Activated naive CD4-positive, alpha-beta T cell treated with anti-CD3 and anti-CD28 coated beads, Interleukin-2, amount 10 ng/mL, durations not matched to agents 7 days and 5 days (primary cell): ENCODE measurements at regions of chr12 and their contacts with region 1.

Region 1: DNA sequence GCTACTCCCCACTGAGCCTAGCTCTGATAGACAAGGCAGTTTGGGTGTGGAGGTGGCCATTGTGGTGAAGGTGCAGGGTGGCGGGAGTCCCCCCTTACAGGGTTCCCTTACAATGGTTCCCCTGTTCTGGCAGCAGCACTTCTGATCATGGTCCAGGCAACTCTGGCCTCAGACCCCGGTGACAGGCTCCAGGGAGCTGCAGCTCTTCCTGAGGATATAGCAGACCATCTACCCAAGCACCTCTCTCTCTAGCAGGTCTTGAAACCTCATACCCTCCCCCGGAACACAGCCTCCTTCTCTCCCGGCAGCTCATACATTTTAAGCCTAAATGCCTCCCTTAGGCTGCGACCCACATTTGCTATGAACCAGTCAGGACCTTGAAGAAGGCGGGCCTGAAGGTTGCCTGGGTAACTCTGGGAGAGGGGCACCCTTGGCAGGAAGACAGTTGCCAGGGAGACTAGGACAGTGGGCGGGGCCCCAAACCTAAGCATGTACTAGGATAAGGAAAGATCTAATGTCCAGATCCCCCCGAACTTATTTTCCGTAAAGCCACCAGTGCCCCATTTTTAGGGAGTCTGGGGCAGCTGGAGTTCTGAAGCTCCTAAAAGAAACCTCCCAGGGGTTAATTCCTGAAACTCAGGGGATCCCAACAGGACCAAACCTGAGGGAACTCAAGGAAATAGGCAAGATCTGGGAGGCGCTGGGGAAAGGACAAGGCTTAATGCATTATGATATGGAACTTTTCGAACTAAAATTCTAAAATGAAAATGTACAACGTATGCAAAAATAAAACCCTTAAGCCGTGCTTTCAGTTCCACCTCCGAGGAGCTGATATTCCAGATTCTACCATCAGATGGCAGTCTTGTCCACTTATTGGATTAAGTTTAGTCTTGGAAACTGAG is 4.5 kb upstream of the GDF11 start:
- DNase-seq: peak; percentile 90
- H3K4me3 Mint-ChIP-seq: peak overlapping the region; percentile 73
- H3K27ac Mint-ChIP-seq: peak overlapping the region; percentile 78
- H3K4me1 Mint-ChIP-seq: peaks cover 41% of the 10 kb centered on the region
- H3K27me3 Mint-ChIP-seq: peaks cover 32% of the 10 kb centered on the region

Region 2: GRCh38 chr12:55715833-55716581 is 22.4 kb before region 1 on chr12 and contains the start of gene BLOC1S1:
- CTCF ChIA-PET with region 1: interaction called, 166 read pairs
- DNase-seq: peak; percentile 96
- H3K4me3 Mint-ChIP-seq: peak within 1 kb of the TSS; percentile 90
- H3K27ac Mint-ChIP-seq: peak within 1 kb of the TSS; percentile 94
- H3K4me1 Mint-ChIP-seq: peaks cover 49% of the 10 kb centered on the region
- H3K27me3 Mint-ChIP-seq: peaks cover 26% of the 10 kb centered on the region

Region 3: GRCh38 chr12:55797068-55797467 is 58.7 kb after region 1 on chr12:
- CTCF ChIA-PET with region 1: interaction called, 58 read pairs
- DNase-seq: peak; percentile 29
- H3K4me3 Mint-ChIP-seq: no peak overlapping the region
- H3K27ac Mint-ChIP-seq: no peak overlapping the region
- H3K4me1 Mint-ChIP-seq: peaks cover 2% of the 10 kb centered on the region
- H3K27me3 Mint-ChIP-seq: no peaks in the 10 kb centered on the region

Region 4: DNA sequence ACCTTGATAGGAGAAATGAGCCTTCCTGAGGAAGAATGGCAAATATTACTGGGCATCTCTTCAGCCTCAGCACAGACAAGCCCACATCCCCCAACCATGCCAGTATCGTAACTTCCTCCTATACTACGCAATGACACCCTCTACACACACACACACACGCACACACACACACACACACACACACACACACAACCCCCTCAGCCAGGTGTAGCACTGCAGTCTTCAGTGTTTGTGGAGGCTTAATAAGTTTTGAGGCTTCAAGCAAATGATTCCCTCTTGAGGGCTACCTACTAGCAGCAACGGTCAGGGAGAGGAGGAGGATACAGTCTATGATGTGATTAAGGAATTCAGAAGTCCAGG is 194.2 kb after region 1 on chr12:
- CTCF ChIA-PET with region 1: interaction called, 16 read pairs
- DNase-seq: peak; percentile 62
- H3K4me3 Mint-ChIP-seq: peak overlapping the region; percentile 92
- H3K27ac Mint-ChIP-seq: peak overlapping the region; percentile 100
- H3K4me1 Mint-ChIP-seq: peaks cover 58% of the 10 kb centered on the region
- H3K27me3 Mint-ChIP-seq: no peaks in the 10 kb centered on the region

Region 5: GRCh38 chr12:55940065-55940732 is 201.8 kb after region 1 on chr12:
- CTCF ChIA-PET with region 1: interaction called, 36 read pairs
- DNase-seq: peak; percentile 91
- H3K4me3 Mint-ChIP-seq: peak overlapping the region; percentile 37
- H3K27ac Mint-ChIP-seq: peak overlapping the region; percentile 86
- H3K4me1 Mint-ChIP-seq: peaks cover 92% of the 10 kb centered on the region
- H3K27me3 Mint-ChIP-seq: no peaks in the 10 kb centered on the region

Region 6: DNA sequence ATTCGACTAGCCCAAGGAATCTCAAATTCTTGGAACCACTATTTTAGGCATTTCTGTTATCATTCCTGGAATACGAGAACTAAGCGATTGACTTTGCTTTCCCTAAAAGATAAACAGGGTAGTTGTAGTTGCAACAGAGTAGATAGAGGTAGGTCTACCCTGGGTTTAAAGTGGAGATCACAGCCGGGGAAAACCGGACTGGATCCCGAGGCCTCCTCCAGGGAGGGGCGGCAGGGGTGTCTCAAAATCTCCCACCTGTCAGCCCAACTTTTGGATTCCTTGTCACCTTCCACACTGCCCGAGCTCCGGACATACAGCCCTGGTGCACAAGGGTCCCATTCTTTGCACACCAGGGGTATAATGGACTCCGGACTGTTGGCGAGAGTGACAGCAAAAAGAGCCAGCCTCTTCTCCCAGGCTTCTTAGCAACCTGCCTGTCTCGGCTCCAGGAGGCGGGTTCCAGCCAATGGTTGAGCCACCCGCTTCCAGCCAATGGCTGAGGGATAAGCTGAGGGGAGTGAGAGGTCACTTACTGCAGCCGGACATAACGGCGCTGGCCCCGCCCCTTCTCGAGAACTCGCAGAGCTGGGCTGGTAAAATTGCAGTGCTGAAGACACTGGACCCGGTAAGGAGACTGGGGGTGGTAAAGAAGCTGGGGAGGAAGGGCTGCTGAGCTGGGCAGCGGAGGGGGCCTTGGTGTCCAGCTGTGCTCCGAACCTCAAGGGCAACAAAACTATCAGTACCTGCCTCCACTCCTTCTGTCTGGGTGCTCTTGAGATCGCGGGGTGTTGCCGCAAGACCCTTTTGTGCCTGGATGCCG is 258.6 kb after region 1 on chr12 and contains the start of gene SUOX:
- CTCF ChIA-PET with region 1: interaction called, 14 read pairs
- DNase-seq: peak; percentile 54
- H3K4me3 Mint-ChIP-seq: peak within 1 kb of the TSS; percentile 57
- H3K27ac Mint-ChIP-seq: peak within 1 kb of the TSS; percentile 42
- H3K4me1 Mint-ChIP-seq: peaks cover 35% of the 10 kb centered on the region
- H3K27me3 Mint-ChIP-seq: peaks cover 30% of the 10 kb centered on the region

Region 7: GRCh38 chr12:56041552-56042429 is 303.4 kb after region 1 on chr12 and contains the start of gene RPS26:
- CTCF ChIA-PET with region 1: interaction called, 24 read pairs
- DNase-seq: peak; percentile 95
- H3K4me3 Mint-ChIP-seq: peak within 1 kb of the TSS; percentile 92
- H3K27ac Mint-ChIP-seq: peak within 1 kb of the TSS; percentile 91
- H3K4me1 Mint-ChIP-seq: peaks cover 54% of the 10 kb centered on the region
- H3K27me3 Mint-ChIP-seq: peaks cover 3% of the 10 kb centered on the region